ENCODE measurements at regions of chr17 and their contacts with region 1.

Region 1: DNA sequence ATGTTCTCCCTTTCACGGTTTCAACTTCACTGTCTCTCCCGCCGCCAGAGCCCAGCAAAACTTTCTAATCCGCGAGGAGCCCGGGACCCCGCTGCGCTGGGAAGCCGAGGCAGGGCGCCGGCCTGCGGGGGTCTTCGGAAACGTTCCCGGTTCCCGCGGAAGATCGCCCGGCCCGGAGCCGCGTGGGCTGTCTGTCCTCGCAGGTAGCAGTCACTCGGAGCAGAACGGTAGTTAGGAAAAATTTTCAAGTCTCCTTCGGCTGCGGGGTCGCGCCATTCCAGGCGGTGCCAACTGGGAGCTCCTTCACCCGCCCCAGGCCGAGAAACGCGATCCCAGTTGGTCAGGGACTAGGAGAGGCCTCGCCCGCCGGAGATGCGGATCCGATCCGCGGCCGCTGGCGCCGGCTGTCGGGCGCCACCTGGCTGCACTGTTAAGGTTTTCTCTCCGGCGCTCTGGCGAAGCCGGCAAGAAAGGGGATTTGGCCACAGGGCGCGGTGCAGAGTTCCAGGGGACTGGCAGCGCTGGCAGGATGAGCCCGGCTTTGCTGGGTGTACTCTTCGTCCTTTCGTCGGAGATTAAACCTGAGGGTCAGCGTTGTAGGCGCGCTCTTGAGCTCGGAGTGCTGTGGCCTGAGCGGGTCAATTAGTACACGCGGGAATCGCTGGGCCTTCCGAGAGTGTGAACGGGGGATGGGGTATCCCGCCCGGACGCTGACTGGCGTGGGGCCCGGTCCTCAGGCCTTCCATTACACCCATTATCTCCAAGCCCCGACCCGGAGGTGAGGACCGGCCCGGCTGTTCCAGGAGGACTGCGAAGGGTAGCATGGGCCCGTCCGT is 135.4 kb downstream of the KCNJ12 start:
- DNase-seq: peak; percentile 89
- H3K4me3 ChIP-seq: peak overlapping the region; percentile 49 to 60; a peak in 3 of 4 replicates
- H3K27ac ChIP-seq: no peak overlapping the region
- H3K4me1 ChIP-seq: no peaks in the 10 kb centered on the region; a peak in 1 of 4 replicates
- H3K27me3 ChIP-seq: no peaks in the 10 kb centered on the region
- CTCF ChIP-seq: peak; percentile 63
- EP300 ChIP-seq: no peak
- RAD21 ChIP-seq: peak; percentile 75

Region 2: GRCh38 chr17:21058098-21058893 is 453.3 kb before region 1 on chr17:
- CTCF ChIA-PET with region 1: no interaction called
- POLR2A ChIA-PET with region 1: no interaction called
- DNase-seq: no peak
- H3K4me3 ChIP-seq: no peak overlapping the region
- H3K27ac ChIP-seq: no peak overlapping the region
- H3K4me1 ChIP-seq: no peaks in the 10 kb centered on the region
- H3K27me3 ChIP-seq: 0 out of 2 replicates have a peak, but pooled peaks cover 4% of the 10 kb centered on the region
- CTCF ChIP-seq: peak; percentile 46; the same call in 1 of the 2 replicates
- EP300 ChIP-seq: no peak
- RAD21 ChIP-seq: no peak

Region 3: DNA sequence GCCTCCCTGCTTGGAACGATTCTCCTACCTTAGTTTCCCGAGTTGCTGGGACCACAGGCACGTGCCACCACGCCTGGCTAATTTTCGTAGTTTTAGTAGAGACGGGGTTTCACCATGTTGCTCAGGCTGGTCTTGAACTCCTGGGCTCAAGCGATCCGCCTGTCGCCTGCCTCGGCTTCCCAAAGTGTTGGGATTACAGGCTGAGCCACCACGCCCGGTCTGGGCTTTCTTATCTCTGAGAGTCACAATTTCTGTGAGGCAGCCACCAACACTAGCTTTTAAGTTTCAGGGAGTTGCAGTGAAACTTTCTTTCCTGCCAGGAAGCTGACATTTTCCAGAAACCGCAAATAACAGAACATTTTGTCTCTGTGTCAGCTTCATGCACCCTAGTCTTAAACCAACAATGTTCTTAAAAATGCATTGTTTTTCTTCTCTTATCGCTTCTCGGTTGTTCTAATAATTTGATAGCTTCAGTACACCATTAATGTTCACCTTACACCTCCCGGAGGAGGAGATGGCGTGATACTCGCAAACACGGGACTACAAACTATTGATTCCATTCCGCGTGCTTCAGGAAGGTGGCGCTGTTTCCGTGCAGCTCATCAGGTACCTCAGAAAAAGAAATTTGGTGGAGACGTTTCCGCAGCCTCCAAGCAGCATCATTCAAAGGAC is 392.2 kb before region 1 on chr17:
- CTCF ChIA-PET with region 1: interaction called, 18 read pairs
- POLR2A ChIA-PET with region 1: no interaction called
- DNase-seq: peak; percentile 71
- H3K4me3 ChIP-seq: peak overlapping the region in 1 of 2 experiments; percentile 30; a peak in 1 of 4 replicates
- H3K27ac ChIP-seq: no peak overlapping the region
- H3K4me1 ChIP-seq: no peaks in the 10 kb centered on the region
- H3K27me3 ChIP-seq: no peaks in the 10 kb centered on the region; the same call in 1 of the 2 replicates
- CTCF ChIP-seq: peak; percentile 86
- EP300 ChIP-seq: no peak
- RAD21 ChIP-seq: peak; percentile 81

Region 4: GRCh38 chr17:21275579-21276263 is 235.9 kb before region 1 on chr17:
- CTCF ChIA-PET with region 1: interaction called, 70 read pairs
- POLR2A ChIA-PET with region 1: no interaction called
- DNase-seq: peak; percentile 97
- H3K4me3 ChIP-seq: peak overlapping the region; percentile 54 to 63
- H3K27ac ChIP-seq: peak overlapping the region in 1 of 2 experiments; percentile 36; a peak in 1 of 4 replicates
- H3K4me1 ChIP-seq: peaks cover 6 to 14% of the 10 kb centered on the region in 2 experiments; a peak in 2 of 4 replicates
- H3K27me3 ChIP-seq: no peaks in the 10 kb centered on the region
- CTCF ChIP-seq: no peak
- EP300 ChIP-seq: no peak
- RAD21 ChIP-seq: no peak

Region 5: DNA sequence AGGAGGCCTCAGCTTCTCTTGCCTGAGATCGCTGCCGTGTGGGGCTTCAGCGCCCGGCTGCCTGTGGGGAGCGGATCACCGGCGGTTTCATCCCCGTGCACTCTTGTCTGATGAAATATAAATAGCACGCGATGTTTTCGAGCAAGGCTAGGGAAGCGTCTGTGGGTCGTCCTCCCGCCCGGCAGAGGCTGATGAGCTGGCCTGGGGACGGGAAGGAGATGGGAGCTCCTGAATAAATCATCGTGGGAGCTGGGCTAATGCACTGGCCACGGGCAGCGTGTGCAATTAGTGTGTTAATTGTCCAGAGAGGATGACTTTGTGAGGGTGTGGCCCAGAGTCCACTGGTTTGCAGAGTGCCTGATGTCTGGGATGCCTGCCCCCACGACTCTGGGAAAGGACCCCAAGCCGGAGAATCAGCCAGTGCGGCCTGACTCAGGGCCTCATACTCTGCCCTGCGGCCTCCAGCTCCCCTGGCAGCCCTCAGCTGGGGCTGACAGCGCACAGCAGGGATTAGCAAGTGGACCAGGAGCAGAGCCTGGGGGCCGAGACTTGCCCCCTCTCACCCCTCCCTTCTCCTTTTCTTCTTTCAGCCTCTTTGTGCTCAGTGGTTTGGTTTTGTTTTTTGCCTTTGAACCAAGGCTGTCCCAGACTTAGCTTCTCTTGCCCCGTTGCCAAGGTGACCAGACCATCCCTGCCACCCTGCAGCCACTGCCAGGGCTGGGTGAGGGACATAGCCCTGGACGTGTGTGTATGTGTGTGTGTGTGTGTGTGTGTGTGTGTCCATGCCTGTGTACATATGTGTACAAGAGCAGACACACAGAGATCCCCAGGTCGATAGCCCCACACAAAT is 114.0 kb before region 1 on chr17:
- CTCF ChIA-PET with region 1: interaction called, 12 read pairs
- POLR2A ChIA-PET with region 1: no interaction called
- DNase-seq: no peak
- H3K4me3 ChIP-seq: no peak overlapping the region
- H3K27ac ChIP-seq: no peak overlapping the region
- H3K4me1 ChIP-seq: peaks cover 3 to 15% of the 10 kb centered on the region in 2 experiments; a peak in 1 of 4 replicates
- H3K27me3 ChIP-seq: no peaks in the 10 kb centered on the region
- CTCF ChIP-seq: no peak
- EP300 ChIP-seq: no peak
- RAD21 ChIP-seq: no peak

Region 6: DNA sequence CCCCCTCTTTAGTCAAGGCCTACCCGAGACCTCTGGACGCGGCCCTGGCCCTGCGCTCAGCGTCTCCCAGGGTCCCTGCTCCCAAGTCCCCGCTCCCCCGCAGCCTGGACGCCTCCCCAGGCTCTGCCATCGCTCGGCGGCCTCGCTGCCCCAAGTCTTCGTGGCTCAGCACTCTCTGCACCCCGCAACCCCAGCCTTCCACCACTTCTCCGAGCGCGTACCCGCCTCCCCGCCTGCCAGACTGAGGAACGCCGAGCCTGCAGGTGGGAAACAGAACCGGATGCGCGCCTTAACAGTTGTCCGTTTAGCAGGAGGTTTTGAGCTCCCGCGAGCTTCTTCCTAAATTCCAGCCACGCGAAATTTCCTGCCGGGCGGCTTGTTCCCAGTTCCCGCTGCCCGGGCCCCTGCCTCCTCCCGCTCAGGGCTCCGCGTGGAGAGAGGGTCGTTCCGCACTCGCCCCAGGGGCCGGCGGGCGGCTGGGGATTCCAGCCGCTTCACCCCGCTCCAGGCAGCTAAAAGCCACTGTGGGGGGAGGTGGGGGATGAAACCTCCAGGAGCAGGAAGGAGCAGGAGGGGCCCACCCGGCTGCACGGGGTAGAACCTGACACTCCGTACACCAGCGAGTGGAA is 47.7 kb before region 1 on chr17:
- CTCF ChIA-PET with region 1: interaction called, 140 read pairs
- POLR2A ChIA-PET with region 1: no interaction called
- DNase-seq: no peak
- H3K4me3 ChIP-seq: no peak overlapping the region
- H3K27ac ChIP-seq: no peak overlapping the region
- H3K4me1 ChIP-seq: no peaks in the 10 kb centered on the region
- H3K27me3 ChIP-seq: no peaks in the 10 kb centered on the region; the same call in 1 of the 2 replicates
- CTCF ChIP-seq: no peak
- EP300 ChIP-seq: no peak
- RAD21 ChIP-seq: no peak

Region 7: DNA sequence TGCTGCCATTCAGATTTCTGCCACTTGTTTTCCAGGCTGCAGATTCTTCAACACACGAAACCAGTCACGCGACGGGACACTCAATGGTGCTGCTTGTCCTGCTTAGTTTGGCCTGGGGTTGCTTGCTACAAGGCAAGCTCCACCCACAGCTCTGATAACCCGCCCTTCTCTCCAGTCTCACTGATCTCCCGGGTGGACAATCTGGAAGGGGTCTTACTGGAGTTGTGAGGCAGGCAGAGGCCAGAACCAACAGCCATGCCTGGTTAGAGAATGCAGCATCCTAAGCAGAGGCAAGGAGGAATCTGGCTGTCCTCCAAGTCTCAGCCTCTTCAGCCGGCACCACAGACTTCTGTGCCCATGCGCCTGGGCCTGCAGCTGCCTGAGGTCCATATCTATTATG is 16.3 kb before region 1 on chr17:
- CTCF ChIA-PET with region 1: interaction called, 23 read pairs
- POLR2A ChIA-PET with region 1: no interaction called
- DNase-seq: peak; percentile 34
- H3K4me3 ChIP-seq: no peak overlapping the region
- H3K27ac ChIP-seq: no peak overlapping the region; a peak in 1 of 4 replicates
- H3K4me1 ChIP-seq: peaks cover 0 to 5% of the 10 kb centered on the region in 2 experiments; a peak in 1 of 4 replicates
- H3K27me3 ChIP-seq: peaks cover 5% of the 10 kb centered on the region; the same call in 1 of the 2 replicates
- CTCF ChIP-seq: no peak
- EP300 ChIP-seq: no peak
- RAD21 ChIP-seq: no peak

Region 8: DNA sequence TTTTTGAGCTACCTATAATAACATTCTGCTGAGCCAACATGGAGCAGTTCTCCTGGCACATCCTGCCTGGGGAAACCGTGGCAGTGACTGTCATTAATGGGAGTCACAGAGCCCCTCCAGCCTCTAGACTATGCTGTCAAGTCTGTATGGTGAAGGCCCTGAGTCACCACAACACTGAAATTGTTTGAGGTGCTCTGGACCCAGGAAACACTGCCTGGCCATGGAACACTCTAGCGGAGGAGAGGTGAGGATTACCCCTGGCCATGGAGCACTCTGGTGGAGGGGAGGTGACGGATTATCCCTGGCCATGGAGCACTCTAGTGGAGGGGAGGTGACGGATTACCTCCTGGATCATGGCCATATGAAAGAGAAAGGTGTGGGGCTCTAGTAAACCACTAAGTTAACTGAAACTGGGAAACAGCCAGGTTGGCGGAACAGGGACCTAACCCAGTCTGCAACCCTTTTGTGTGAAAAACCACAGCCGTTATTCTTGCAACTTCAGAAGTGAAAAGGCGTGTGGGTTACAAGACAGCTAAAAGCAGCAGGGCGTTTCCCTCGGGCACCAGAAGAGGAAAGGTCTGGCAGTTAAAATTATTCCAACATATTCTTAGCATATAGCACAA is 21.3 kb after region 1 on chr17:
- CTCF ChIA-PET with region 1: interaction called, 24 read pairs
- POLR2A ChIA-PET with region 1: no interaction called
- DNase-seq: no peak
- H3K4me3 ChIP-seq: no peak overlapping the region
- H3K27ac ChIP-seq: no peak overlapping the region
- H3K4me1 ChIP-seq: no peaks in the 10 kb centered on the region
- H3K27me3 ChIP-seq: no peaks in the 10 kb centered on the region
- CTCF ChIP-seq: no peak
- EP300 ChIP-seq: no peak
- RAD21 ChIP-seq: no peak

Region 9: GRCh38 chr17:21705021-21705601 is 193.5 kb after region 1 on chr17:
- CTCF ChIA-PET with region 1: no interaction called
- POLR2A ChIA-PET with region 1: no interaction called
- DNase-seq: no peak
- H3K4me3 ChIP-seq: no peak overlapping the region
- H3K27ac ChIP-seq: no peak overlapping the region
- H3K4me1 ChIP-seq: no peaks in the 10 kb centered on the region
- H3K27me3 ChIP-seq: peaks cover 17% of the 10 kb centered on the region; the same call in 1 of the 2 replicates
- CTCF ChIP-seq: no peak
- EP300 ChIP-seq: no peak
- RAD21 ChIP-seq: no peak